GM23248 (cell line): ENCODE measurements at regions of chr17 and their contacts with region 1.

Region 1: GRCh38 chr17:63082273-63082993 is 116.4 kb downstream of the TANC2 start:
- DNase-seq: peak; percentile 60
- H3K4me3 ChIP-seq: no peak overlapping the region
- H3K27ac ChIP-seq: peak overlapping the region; percentile 33
- H3K4me1 ChIP-seq: peaks cover 29% of the 10 kb centered on the region
- H3K27me3 ChIP-seq: no peaks in the 10 kb centered on the region

Region 2: DNA sequence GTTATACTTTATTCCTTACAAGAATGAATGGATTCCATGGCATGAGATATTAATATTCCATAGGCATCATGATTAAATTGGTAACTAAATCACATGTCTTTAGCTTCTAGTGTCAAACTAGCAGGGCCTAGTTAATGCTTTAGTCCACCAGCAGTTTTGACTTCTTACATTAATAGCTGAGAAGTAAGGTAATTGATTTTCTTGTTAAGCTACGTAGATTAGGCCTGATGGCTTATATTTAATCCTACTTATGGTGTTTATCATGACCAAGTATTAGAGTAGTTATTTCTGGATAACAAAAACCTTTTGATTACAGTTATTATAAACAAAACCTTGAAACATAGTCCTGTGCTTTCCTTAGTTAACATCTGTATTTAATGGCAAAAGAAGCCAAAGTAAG is 68.1 kb after region 1 on chr17:
- in situ Hi-C with region 1: no loop called
- DNase-seq: no peak
- H3K4me3 ChIP-seq: no peak overlapping the region
- H3K27ac ChIP-seq: no peak overlapping the region
- H3K4me1 ChIP-seq: peaks cover 34% of the 10 kb centered on the region
- H3K27me3 ChIP-seq: no peaks in the 10 kb centered on the region

Region 3: GRCh38 chr17:63399856-63400255 is 317.4 kb after region 1 on chr17:
- in situ Hi-C with region 1: loop called (anchors 10 kb)
- DNase-seq: peak; percentile 70
- H3K4me3 ChIP-seq: peak overlapping the region; percentile 24; the same call in 1 of the 2 replicates
- H3K27ac ChIP-seq: peak overlapping the region; percentile 90
- H3K4me1 ChIP-seq: peaks cover 54% of the 10 kb centered on the region
- H3K27me3 ChIP-seq: no peaks in the 10 kb centered on the region